Sciatic nerve (tissue), 2 donors: ENCODE measurements at regions of chr20 and their contacts with region 1.

Region 1: GRCh38 chr20:43537921-43538877 is 20.6 kb upstream of the SGK2 start:
- DNase-seq: peak; percentile 84
- ATAC-seq: peak; percentile 70

Region 2: GRCh38 chr20:43603136-43603535 is 64.9 kb after region 1 on chr20:
- intact Hi-C with region 1: no loop called
- DNase-seq: no peak
- ATAC-seq: no peak

Region 3: DNA sequence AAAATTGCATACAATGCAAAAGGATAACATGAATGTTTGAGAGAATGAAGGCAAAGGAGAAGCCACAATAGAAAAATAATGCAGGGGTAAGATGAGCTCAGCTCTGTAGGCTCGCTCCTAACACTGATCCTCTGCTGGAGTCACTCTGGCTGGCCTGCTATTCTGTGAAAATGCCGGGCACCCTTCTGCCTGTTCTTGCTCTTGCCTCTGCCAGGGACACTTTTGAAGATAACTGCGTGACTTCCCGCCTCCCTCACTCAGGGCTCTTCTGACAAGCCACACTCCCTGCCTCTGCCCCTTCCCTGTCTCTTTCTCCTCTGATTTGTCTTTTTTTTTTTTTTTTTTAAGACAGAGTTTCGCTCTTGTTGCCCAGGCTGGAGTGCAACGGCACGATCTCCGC is 93.4 kb after region 1 on chr20:
- intact Hi-C with region 1: loop called (anchors 10 kb)
- DNase-seq: no peak
- ATAC-seq: no peak